ENCODE measurements at regions of chr16 and their contacts with region 1.

Region 1: GRCh38 chr16:31202414-31203375 is at the start of gene PYCARD:
- DNase-seq: no peak
- ATAC-seq: peak; percentile 51
- H3K4me3 ChIP-seq: peak within 1 kb of the TSS; percentile 86
- H3K27ac ChIP-seq: peak within 1 kb of the TSS; percentile 76
- H3K4me1 ChIP-seq: peaks cover 24% of the 10 kb centered on the region
- H3K27me3 ChIP-seq: no peaks in the 10 kb centered on the region
- CTCF ChIP-seq: no peak
- EP300 ChIP-seq: no peak
- POLR2A ChIP-seq: peak; percentile 76
- RAD21 ChIP-seq: no peak
- polyA plus RNA-seq, gene PYCARD: 5.1 to 14.9 TPM

Region 2: DNA sequence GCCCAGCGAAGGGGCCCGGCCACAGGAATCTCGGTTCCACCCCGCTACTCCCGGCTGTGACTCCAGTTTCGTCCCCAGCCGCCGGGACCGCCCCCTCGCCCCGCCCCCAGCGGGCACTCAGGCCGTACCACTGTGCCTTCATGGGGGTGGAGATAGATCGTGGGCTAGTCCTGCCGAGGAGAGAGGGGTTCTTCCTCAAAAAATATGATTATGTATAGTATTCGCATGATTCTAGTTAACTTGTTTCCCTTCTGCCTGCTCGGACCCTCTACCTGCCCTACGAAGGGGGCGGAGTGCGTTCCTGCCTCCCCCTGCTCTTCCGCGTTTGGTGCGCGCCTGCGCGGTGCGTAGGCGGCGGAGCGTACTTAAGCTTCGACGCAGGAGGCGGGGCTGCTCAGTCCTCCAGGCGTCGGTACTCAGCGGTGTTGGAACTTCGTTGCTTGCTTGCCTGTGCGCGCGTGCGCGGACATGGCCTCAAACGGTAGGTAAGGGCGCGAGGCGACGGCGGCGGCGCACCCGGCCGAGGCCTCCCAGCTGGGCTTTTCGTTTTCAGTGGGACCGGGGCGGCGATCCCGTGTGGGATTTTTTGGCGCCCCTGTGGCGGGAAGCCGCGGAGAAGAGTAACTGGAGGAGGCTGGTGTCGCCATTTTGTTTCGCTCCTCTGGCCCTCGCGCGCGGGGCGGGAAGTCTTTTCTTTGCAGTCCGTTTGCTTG is 22.8 kb before region 1 on chr16 and contains the start of gene FUS:
- CTCF ChIA-PET with region 1: interaction called, 6 read pairs
- POLR2A ChIA-PET with region 1: interaction called, 26 read pairs
- RAD21 ChIA-PET with region 1: interaction called, 11 read pairs
- SMC1A ChIA-PET with region 1: interaction called, 5 read pairs
- in situ Hi-C with region 1: no loop called
- intact Hi-C with region 1: no loop called
- DNase-seq: peak; percentile 50
- ATAC-seq: peak; percentile 78
- H3K4me3 ChIP-seq: peak within 1 kb of the TSS; percentile 87
- H3K27ac ChIP-seq: peak within 1 kb of the TSS; percentile 98
- H3K4me1 ChIP-seq: peaks cover 22% of the 10 kb centered on the region
- H3K27me3 ChIP-seq: no peaks in the 10 kb centered on the region
- CTCF ChIP-seq: no peak
- EP300 ChIP-seq: no peak
- POLR2A ChIP-seq: peak; percentile 91
- RAD21 ChIP-seq: no peak
- polyA plus RNA-seq, gene FUS: 46.8 to 131 TPM

Region 3: DNA sequence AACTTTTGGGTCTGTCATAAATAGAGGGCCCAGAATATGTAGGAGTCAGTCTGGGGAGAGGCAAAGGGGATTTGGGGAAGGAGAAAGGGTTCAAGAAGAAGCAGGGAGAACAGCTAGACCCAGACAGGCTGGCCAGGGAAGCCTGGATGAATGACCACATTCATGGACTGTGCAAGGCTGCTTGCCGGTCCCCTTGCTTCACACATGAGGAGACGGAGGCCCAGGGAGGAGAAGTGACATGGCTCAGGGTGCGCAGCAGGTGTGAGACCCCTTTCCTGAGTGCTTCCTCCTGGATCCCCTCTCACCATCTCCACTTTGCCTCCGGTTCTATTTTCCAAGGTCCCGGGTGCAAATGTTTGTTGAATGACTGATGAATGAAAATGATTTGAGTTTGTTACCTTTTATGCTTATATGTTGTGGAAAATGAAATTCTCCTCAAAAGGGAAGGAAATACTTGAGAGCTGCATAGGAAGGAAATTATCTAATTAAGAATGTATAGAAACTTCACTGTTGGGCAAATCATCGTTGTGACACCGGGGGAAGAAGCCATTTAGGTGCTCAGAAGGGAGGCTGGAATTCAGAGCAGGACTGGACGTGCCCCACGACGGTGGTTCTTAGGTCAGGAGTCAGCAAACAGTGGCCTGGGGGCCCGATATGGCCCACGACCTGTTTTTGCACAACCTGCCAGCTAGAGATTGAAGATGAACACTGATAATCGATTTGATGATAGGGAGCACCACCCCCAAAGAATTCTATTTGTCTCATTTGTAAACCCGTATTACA is 57.6 kb after region 1 on chr16:
- CTCF ChIA-PET with region 1: interaction called, 5 read pairs
- POLR2A ChIA-PET with region 1: interaction called, 7 read pairs
- RAD21 ChIA-PET with region 1: interaction called, 14 read pairs
- SMC1A ChIA-PET with region 1: interaction called, 14 read pairs
- in situ Hi-C with region 1: no loop called
- intact Hi-C with region 1: no loop called
- DNase-seq: no peak
- ATAC-seq: peak; percentile 11; the same call in 1 of the 3 replicates
- H3K4me3 ChIP-seq: peak overlapping the region; percentile 33; the same call in 1 of the 2 replicates
- H3K27ac ChIP-seq: peak overlapping the region; percentile 39
- H3K4me1 ChIP-seq: peaks cover 34% of the 10 kb centered on the region
- H3K27me3 ChIP-seq: no peaks in the 10 kb centered on the region
- CTCF ChIP-seq: no peak
- EP300 ChIP-seq: no peak
- POLR2A ChIP-seq: no peak
- RAD21 ChIP-seq: no peak

Region 4: GRCh38 chr16:31265329-31266245 is 62.9 kb after region 1 on chr16:
- CTCF ChIA-PET with region 1: interaction called, 4 read pairs
- POLR2A ChIA-PET with region 1: interaction called, 3 read pairs
- RAD21 ChIA-PET with region 1: interaction called, 14 read pairs
- SMC1A ChIA-PET with region 1: interaction called, 14 read pairs
- in situ Hi-C with region 1: no loop called
- intact Hi-C with region 1: no loop called
- DNase-seq: peak; percentile 79
- ATAC-seq: peak; percentile 95
- H3K4me3 ChIP-seq: peak overlapping the region; percentile 32; the same call in 1 of the 2 replicates
- H3K27ac ChIP-seq: peak overlapping the region; percentile 88
- H3K4me1 ChIP-seq: peaks cover 32% of the 10 kb centered on the region
- H3K27me3 ChIP-seq: no peaks in the 10 kb centered on the region
- CTCF ChIP-seq: peak; percentile 20 to 21 (median 21); a peak in 2 of 6 replicates
- EP300 ChIP-seq: peak in 1 of 2 experiments; percentile 51; a peak in 1 of 4 replicates
- POLR2A ChIP-seq: no peak; the same call in 1 of the 2 replicates
- RAD21 ChIP-seq: peak; percentile 25; the same call in 1 of the 2 replicates

Region 5: GRCh38 chr16:31286421-31287032 is 83.8 kb after region 1 on chr16:
- CTCF ChIA-PET with region 1: no interaction called
- POLR2A ChIA-PET with region 1: no interaction called
- RAD21 ChIA-PET with region 1: interaction called, 3 read pairs
- SMC1A ChIA-PET with region 1: interaction called, 7 read pairs
- in situ Hi-C with region 1: no loop called
- intact Hi-C with region 1: loop called (anchors 5 kb)
- DNase-seq: peak; percentile 55
- ATAC-seq: peak; percentile 94
- H3K4me3 ChIP-seq: peak overlapping the region; percentile 18; the same call in 1 of the 2 replicates
- H3K27ac ChIP-seq: no peak overlapping the region
- H3K4me1 ChIP-seq: peaks cover 18% of the 10 kb centered on the region
- H3K27me3 ChIP-seq: no peaks in the 10 kb centered on the region
- CTCF ChIP-seq: no peak
- EP300 ChIP-seq: no peak
- POLR2A ChIP-seq: no peak
- RAD21 ChIP-seq: no peak

Region 6: DNA sequence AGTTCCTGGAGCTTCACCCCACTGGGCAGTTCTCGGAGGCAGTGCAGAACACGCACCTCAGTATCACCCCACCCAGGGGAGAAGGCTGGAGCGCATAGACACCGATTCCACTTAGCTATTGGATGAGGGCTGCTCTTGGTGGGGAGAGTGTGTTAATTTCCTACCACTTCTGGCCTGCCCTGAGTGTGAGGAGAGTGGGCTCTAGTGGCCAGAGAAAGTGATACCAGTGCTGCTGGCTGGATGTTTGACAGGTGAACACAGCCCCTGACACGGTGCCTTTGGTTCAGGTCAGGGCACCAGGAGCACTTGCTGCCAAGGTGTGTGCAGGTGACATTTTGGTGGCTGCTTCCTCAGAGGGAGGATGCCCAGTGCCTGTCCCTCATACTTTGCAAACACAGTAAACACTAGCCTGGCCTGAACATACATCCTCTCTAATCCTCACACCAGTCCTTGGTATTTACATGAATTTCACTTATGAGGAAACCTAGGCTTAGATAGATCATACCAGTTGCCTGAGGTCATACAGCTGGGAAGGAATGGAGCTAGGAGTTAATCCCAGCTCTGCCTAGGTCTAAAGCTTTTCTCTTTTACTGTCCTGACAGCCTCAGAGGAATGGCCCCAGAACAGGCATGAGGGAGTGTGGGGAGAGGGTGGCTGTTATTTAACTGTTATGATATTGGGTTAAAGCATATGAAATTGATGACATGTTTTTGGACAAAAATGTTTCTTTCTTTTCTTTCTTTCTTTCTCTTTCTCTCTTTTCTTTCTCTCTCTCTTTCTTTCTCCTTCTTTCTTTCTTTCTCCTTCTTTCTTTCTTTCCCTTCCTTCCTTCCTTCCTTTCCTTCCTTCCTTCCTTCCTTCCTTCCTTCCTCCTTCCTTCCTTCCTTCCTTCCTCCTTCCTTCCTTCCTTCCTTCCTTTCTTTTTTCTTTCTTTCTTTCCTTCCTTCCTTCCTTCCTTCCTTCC is 131.3 kb after region 1 on chr16:
- CTCF ChIA-PET with region 1: interaction called, 4 read pairs
- POLR2A ChIA-PET with region 1: interaction called, 3 read pairs
- RAD21 ChIA-PET with region 1: interaction called, 11 read pairs
- SMC1A ChIA-PET with region 1: interaction called, 5 read pairs
- in situ Hi-C with region 1: no loop called
- intact Hi-C with region 1: loop called (anchors 5 kb)
- DNase-seq: no peak
- ATAC-seq: peak; percentile 96
- H3K4me3 ChIP-seq: no peak overlapping the region
- H3K27ac ChIP-seq: no peak overlapping the region
- H3K4me1 ChIP-seq: no peaks in the 10 kb centered on the region
- H3K27me3 ChIP-seq: no peaks in the 10 kb centered on the region
- CTCF ChIP-seq: peak; percentile 63 to 80 (median 77)
- EP300 ChIP-seq: no peak
- POLR2A ChIP-seq: no peak
- RAD21 ChIP-seq: peak; percentile 92

Region 7: GRCh38 chr16:31440516-31441184 is 238.0 kb after region 1 on chr16:
- CTCF ChIA-PET with region 1: interaction called, 12 read pairs
- POLR2A ChIA-PET with region 1: no interaction called
- RAD21 ChIA-PET with region 1: interaction called, 4 read pairs
- SMC1A ChIA-PET with region 1: interaction called, 4 read pairs
- in situ Hi-C with region 1: loop called (anchors 5 kb)
- intact Hi-C with region 1: loop called (anchors 5 kb)
- DNase-seq: no peak
- ATAC-seq: no peak
- H3K4me3 ChIP-seq: no peak overlapping the region
- H3K27ac ChIP-seq: no peak overlapping the region
- H3K4me1 ChIP-seq: no peaks in the 10 kb centered on the region
- H3K27me3 ChIP-seq: no peaks in the 10 kb centered on the region
- CTCF ChIP-seq: no peak
- EP300 ChIP-seq: no peak
- POLR2A ChIP-seq: no peak
- RAD21 ChIP-seq: no peak